ENCODE measurements at regions of chr6 and their contacts with region 1.

Region 1: DNA sequence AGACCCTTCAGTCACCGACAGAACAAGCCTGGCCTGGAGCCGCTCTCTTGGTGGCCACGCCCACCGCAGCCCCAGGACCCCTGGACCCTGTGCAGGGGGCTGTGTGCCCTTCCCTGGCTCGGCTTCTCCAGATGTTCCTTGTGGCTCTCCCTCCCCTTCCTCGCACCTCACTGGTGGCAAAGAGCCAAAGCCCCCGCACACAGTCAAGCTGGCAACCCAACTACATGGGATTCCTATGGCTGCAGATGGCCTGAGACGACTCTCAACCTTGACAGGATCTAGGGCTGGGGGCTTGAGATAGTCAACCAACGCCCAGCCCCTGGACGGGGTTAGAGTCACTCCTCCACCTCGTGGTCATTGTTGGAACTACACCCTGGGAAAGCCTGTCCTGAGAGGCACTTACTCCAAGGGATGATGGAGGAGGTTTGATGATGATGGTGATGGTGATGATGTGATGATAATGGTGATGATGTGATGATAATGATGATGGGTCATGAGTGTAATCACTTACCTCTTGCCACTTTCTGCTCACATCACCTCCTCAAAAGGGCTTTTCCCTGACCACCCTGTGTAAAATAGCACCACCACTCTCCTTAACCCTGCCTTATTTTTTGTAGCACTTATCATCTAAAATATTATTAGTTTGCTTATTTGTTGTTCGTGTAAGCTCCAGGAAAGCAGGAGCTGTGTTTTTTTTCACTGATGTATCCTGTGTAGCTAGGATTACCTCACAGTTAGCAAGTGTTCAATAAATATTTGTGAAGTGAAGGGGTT is 278.4 kb downstream of the LRFN2 start:
- DNase-seq: peak in 41 of 42 donors; percentile 33 to 90 (median 75)

Region 2: GRCh38 chr6:39357998-39358686 is 950.6 kb before region 1 on chr6:
- intact Hi-C with region 1: loop called (anchors 10 kb)
- DNase-seq: peak in 1 of 42 donors; percentile 38

Region 3: GRCh38 chr6:39904946-39905639 is 403.6 kb before region 1 on chr6:
- intact Hi-C with region 1: no loop called
- DNase-seq: peak in 5 of 42 donors; percentile 30 to 54 (median 42)

Region 4: GRCh38 chr6:40743226-40743625 is 434.5 kb after region 1 on chr6:
- intact Hi-C with region 1: no loop called
- DNase-seq: no peak